ENCODE measurements at regions of chr10 and their contacts with region 1.

Region 1: GRCh38 chr10:110225756-110226542 is 18.5 kb downstream of the MXI1 start:
- DNase-seq: peak; percentile 78 to 95 (median 86)
- ATAC-seq: peak; percentile 71 to 83 (median 81)
- H3K4me3 ChIP-seq: peak overlapping the region; percentile 62 to 87
- H3K4me3 Mint-ChIP-seq: peak overlapping the region; percentile 92 to 94 (median 93)
- H3K27ac ChIP-seq: peak overlapping the region; percentile 65
- H3K27ac Mint-ChIP-seq: peak overlapping the region; percentile 92 to 95
- H3K4me1 ChIP-seq: peaks cover 12 to 24% of the 10 kb centered on the region in 2 experiments
- H3K4me1 Mint-ChIP-seq: peaks cover 40 to 53% (median 46%) of the 10 kb centered on the region in 3 donors
- H3K27me3 ChIP-seq: no peaks in the 10 kb centered on the region
- H3K27me3 Mint-ChIP-seq: no peaks in the 10 kb centered on the region

Region 2: DNA sequence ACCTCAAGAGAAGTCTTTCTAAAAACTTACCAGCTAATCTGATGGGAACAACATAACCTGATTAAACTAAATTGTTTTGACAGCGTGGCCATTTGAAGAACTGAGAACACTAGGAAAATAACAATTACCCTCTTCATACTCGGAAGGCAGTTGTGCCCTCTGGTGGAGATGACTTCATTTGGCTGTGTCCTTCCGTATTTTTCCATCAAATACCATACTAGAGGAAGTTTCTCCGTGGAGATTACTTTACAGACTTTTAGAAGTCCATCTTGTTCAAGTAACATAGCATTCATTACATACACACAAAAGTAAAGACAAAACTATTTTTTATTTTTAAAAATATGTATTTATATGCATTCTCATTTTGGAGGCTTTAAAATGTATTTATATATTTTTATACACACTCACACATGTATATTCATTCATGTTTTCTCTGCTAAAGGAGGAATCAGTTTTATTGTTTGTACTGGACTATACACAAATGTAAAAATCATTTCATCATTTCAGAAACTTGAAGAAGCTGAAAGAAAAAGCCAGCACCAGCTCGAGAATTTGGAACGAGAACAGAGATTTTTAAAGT is 53.5 kb after region 1 on chr10:
- CTCF ChIA-PET with region 1: interaction called, 4 to 13 read pairs
- POLR2A ChIA-PET with region 1: interaction called, 3 to 4 read pairs
- DNase-seq: peak in 33 of 35 experiments; percentile 3 to 78 (median 31)
- ATAC-seq: peak in 2 of 4 experiments; percentile 36 to 82
- H3K4me3 ChIP-seq: no peak overlapping the region
- H3K4me3 Mint-ChIP-seq: peak overlapping the region in 1 of 3 donors; percentile 23
- H3K27ac ChIP-seq: no peak overlapping the region
- H3K27ac Mint-ChIP-seq: no peak overlapping the region
- H3K4me1 ChIP-seq: peaks cover 1 to 3% of the 10 kb centered on the region in 2 experiments
- H3K4me1 Mint-ChIP-seq: peaks cover 21 to 43% (median 32%) of the 10 kb centered on the region in 3 donors
- H3K27me3 ChIP-seq: no peaks in the 10 kb centered on the region
- H3K27me3 Mint-ChIP-seq: no peaks in the 10 kb centered on the region

Region 3: DNA sequence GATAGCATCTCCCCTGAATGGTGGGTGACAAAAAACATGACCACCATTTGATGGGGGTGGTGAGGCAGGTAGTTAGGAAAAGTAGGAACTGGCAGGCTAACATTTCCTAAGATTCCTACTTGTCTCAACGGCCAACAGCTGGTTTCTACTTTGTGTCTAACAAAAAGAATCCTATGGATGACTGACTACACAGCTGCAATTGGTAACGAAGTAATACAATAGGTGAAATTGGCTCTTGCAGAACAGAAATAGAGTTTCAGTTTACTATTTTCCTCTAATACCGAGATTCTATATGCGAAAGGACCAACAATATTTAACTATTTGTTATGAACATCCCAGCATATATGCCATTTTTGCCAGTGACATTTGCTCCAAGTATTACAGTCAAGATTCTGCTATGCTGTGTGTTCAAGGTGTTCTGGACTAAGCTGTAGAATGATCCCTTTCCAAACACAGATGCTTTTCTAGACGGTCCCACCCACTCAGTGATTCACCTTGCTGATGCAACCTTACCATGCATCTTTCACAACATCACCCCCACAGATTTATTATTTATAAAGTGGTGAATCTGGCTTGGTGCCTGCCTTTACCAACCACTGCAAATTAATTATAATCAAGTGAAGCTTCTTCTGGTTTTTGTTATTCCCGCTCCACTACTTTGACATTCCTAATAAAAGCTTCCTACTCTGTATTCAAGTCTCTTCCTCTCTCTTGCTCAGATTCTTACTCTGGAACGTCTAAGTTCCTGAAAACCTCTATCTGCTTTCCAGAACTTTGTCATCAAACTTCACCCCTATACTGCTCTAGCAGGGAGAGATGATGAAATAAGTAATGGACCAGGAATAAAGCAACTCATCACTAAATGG is 676.2 kb after region 1 on chr10:
- CTCF ChIA-PET with region 1: no interaction called
- POLR2A ChIA-PET with region 1: no interaction called
- DNase-seq: no peak
- ATAC-seq: peak in 2 of 4 experiments; percentile 18 to 35
- H3K4me3 ChIP-seq: no peak overlapping the region
- H3K4me3 Mint-ChIP-seq: no peak overlapping the region
- H3K27ac ChIP-seq: no peak overlapping the region
- H3K27ac Mint-ChIP-seq: peak overlapping the region; percentile 59 to 83
- H3K4me1 ChIP-seq: no peaks in the 10 kb centered on the region
- H3K4me1 Mint-ChIP-seq: peaks cover 24 to 44% (median 29%) of the 10 kb centered on the region in 3 donors
- H3K27me3 ChIP-seq: no peaks in the 10 kb centered on the region
- H3K27me3 Mint-ChIP-seq: no peaks in the 10 kb centered on the region